Posterior vena cava (tissue), 2 donors: ENCODE measurements at regions of chr2 and their contacts with region 1.

Region 1: DNA sequence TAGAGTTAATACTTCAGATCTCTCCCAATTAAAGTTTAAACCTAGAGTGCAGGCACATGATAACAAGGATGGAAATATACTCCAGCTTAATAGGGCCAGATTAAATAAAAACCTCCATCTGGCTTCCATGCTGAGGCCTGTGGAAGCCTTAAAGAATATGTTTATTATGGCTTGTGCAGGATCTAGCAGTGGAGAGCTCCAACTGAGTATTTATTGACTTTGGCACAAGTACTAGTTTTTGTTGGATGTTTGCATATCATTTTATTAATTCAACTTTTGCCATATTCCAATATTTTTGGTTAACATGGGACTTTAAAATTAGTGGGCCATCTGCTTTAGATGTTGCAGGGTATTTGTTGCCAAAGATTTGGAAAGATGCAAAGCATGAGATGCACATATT is 860.4 kb upstream of the SOX11 start:
- DNase-seq: no peak

Region 2: GRCh38 chr2:4780679-4781078 is 51.1 kb before region 1 on chr2:
- intact Hi-C with region 1: loop called in 1 of 2 experiments (anchors 2 kb)
- DNase-seq: no peak